Left ventricle myocardium superior (tissue), 1 donor: ENCODE measurements at regions of chr22 and their contacts with region 1.

Region 1: DNA sequence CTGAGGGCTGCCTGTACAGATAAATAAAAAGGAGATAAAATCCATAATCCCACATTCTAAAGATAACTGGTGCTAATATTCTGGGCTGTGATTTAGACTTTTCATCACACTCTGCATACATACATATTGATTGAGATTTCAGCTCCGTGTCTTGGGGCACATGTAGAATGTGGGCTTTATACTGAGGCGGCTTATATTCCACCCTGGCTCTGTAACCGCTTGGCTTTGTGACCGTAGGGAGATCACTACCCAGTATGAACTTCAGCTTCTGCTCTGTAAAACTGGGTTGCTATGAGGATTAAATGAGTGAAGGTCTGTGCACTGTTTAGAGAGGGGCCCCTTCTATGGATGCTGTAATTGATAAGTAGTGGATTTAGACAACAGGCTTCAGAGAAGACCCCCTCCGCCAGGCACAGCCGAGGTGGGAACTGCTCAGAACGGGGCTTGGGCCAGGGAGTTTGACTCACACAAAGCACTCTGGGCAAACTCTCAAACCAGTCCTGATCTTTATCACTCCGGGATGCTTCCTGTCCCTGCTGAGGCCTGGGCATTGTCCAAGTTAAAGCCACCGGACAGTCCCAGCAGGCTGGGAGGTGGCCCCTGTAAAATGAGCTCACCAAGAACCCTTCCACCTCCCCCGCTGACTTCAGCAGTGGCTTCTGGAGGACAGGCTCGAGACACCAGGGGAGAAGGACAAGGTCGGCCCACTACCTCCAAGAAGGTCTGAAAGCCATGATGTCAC is 17.2 kb downstream of the KIAA1671 start:
- DNase-seq: peak; percentile 59
- ATAC-seq: peak; percentile 79

Region 2: DNA sequence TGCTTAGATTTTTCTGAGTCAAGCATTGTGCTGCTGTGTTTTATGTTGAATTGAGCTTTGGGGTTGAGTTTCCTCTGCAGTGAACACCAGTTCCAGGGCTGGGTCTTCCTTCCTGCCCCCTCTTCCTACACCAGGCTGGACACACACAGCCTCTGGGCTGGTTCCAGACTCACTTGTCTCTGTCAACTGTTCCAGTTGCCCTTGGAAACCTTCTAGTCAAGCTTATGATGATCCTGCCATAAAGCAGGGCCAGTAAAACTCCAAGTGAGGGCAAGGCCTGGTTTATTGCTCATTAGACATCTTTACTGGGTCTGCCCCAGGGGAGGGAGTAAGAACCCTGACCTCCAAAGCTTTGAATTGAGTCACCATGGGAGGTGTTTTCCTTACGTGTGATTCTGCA is 43.9 kb after region 1 on chr22:
- intact Hi-C with region 1: loop called (anchors 2 kb)
- DNase-seq: no peak
- ATAC-seq: peak; percentile 69

Region 3: GRCh38 chr22:25081409-25081824 is 111.7 kb after region 1 on chr22:
- intact Hi-C with region 1: no loop called
- DNase-seq: no peak
- ATAC-seq: peak; percentile 39